ENCODE measurements at regions of chr10 and their contacts with region 1.

Region 1: DNA sequence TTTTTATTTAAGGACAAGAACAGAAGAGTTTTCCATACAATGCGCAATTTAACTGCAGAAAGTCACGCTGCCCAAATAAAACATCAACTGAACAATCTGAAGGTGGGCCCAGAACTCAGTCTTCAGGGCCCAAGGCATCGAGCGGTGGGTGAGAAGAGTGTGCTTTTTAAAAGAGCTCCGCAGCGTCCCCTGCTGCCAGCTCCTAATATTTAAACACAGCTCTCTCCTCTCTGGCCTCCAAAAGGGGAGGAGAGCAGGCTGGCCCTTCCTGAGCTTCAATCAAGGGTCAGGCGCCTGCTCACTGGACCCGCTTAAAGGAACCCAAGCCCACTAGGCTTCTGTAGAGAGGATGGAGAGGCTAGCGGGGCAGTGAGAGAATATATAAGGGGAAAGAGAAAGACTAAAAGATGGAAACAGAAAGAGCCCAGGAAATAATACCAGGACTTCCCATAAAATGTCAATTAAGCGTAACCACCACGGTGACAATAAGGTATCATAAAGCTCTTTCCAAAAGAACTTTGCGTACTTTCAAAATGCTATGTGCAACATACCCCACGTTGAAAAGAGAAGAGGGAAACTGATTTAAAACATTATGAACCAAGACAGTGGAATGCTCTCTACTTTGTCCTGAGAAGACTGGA is 2.8 kb downstream of the FAM53B start:
- DNase-seq: peak; percentile 81
- ATAC-seq: peak; percentile 55 to 69 (median 62)
- H3K4me3 ChIP-seq: peak overlapping the region in 1 of 3 donors; percentile 12
- H3K27ac ChIP-seq: peak overlapping the region; percentile 30 to 53 (median 46)
- H3K4me1 ChIP-seq: peaks cover 0 to 59% (median 33%) of the 10 kb centered on the region in 4 donors
- H3K27me3 ChIP-seq: no peaks in the 10 kb centered on the region
- CTCF ChIP-seq: peak; percentile 78 to 88 (median 82)
- POLR2A ChIP-seq: no peak

Region 2: DNA sequence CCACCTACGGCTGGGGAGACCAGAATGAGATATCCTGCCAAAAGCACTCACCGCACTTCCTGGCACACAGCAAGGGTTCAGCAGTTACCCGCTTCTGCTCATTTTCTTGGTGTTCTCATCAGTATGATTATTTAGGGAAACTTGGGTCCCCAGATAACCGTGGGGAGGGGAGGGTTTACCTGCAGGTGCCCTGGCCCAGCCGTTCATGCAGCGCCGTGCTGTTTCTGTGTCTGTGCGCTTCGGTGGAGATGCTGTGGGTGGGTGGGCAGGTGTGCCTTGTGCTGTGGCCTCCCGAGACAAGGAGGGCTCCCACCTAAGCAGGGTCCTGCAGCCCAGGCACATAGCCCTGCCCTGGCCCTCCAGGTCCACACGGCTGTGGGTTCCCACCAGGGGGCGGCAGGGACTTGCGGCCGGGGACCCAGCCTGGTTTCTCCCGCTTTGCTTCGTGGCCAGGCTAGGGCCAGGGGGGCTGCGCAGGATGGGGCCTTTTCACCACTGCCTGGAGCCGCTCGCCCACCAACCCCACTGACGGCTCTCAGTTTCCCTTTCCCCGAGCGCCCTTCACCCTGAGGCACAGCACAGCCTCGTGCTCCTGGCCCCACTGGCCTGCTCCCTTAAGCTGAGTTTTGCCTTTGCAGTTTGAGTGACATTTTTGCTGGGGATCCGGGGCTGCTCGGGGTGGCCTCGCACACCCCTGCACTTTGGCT is 201.3 kb before region 1 on chr10:
- intact Hi-C with region 1: loop called in 1 of 2 experiments (anchors 10 kb)
- DNase-seq: peak in 2 of 3 donors; percentile 63 to 73
- ATAC-seq: peak; percentile 62 to 80 (median 72)
- H3K4me3 ChIP-seq: no peak overlapping the region
- H3K27ac ChIP-seq: no peak overlapping the region
- H3K4me1 ChIP-seq: no peaks in the 10 kb centered on the region
- H3K27me3 ChIP-seq: no peaks in the 10 kb centered on the region
- CTCF ChIP-seq: peak; percentile 50 to 58 (median 54)
- POLR2A ChIP-seq: no peak